ENCODE measurements at regions of chr2 and their contacts with region 1.

Region 1: DNA sequence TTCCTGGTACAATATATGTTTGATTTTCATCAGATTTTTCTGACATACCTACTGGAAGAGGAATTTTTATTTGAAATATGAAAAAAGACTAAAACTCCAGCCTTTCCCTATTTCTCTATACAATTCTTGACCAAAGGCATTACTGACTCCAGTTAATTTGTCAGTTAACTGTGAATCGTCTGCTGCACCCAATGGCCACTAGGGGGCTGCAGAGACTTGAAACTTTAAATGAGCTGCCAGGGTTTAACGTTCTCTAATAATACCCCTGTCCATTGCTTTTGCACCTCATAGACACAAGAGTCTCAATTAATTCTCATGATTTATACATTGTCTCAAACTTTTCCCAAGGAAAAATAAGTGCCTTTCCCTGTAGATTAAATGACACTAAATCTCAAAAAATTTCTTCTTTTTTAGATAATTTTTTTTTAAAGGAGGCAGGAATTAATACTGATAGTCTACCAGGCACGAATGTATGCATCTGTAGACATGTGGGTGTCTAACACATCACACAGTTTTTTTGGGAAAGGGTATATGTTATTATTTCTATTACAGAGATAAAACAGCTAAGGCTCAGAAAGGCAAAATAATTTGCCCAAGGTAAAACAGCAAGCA is 1.8 kb upstream of the ALK start:
- DNase-seq: no peak
- ATAC-seq: no peak
- H3K4me3 Mint-ChIP-seq: no peak overlapping the region
- H3K27ac Mint-ChIP-seq: no peak overlapping the region
- H3K4me1 Mint-ChIP-seq: peaks cover 14% of the 10 kb centered on the region
- H3K27me3 Mint-ChIP-seq: peaks cover 42% of the 10 kb centered on the region
- CTCF ChIP-seq: peak; percentile 61

Region 2: GRCh38 chr2:28821295-28821958 is 1101.8 kb before region 1 on chr2:
- CTCF ChIA-PET with region 1: no interaction called
- POLR2A ChIA-PET with region 1: no interaction called
- intact Hi-C with region 1: loop called (anchors 2 kb)
- DNase-seq: peak; percentile 17
- ATAC-seq: peak; percentile 72
- H3K4me3 Mint-ChIP-seq: no peak overlapping the region
- H3K27ac Mint-ChIP-seq: no peak overlapping the region
- H3K4me1 Mint-ChIP-seq: peaks cover 4% of the 10 kb centered on the region
- H3K27me3 Mint-ChIP-seq: no peaks in the 10 kb centered on the region
- CTCF ChIP-seq: no peak

Region 3: GRCh38 chr2:30026087-30027055 is 103.2 kb after region 1 on chr2:
- CTCF ChIA-PET with region 1: interaction called, 3 read pairs
- POLR2A ChIA-PET with region 1: no interaction called
- intact Hi-C with region 1: loop called (anchors 1 kb)
- DNase-seq: no peak
- ATAC-seq: no peak
- H3K4me3 Mint-ChIP-seq: no peak overlapping the region
- H3K27ac Mint-ChIP-seq: no peak overlapping the region
- H3K4me1 Mint-ChIP-seq: no peaks in the 10 kb centered on the region
- H3K27me3 Mint-ChIP-seq: peaks cover 13% of the 10 kb centered on the region
- CTCF ChIP-seq: no peak

Region 4: GRCh38 chr2:30072250-30072842 is 149.1 kb after region 1 on chr2:
- CTCF ChIA-PET with region 1: no interaction called
- POLR2A ChIA-PET with region 1: no interaction called
- intact Hi-C with region 1: loop called (anchors 2 kb)
- DNase-seq: no peak
- ATAC-seq: no peak
- H3K4me3 Mint-ChIP-seq: no peak overlapping the region
- H3K27ac Mint-ChIP-seq: no peak overlapping the region
- H3K4me1 Mint-ChIP-seq: no peaks in the 10 kb centered on the region
- H3K27me3 Mint-ChIP-seq: peaks cover 14% of the 10 kb centered on the region
- CTCF ChIP-seq: no peak